ENCODE measurements at regions of chr12 and their contacts with region 1.

Region 1: GRCh38 chr12:118372541-118373495 is at the start of gene TAOK3:
- DNase-seq: peak; percentile 99
- H3K4me3 ChIP-seq: peak within 1 kb of the TSS; percentile 88 to 96 (median 92)
- H3K27ac ChIP-seq: peak within 1 kb of the TSS; percentile 86 to 95 (median 90)
- H3K4me1 ChIP-seq: peaks cover 28 to 67% (median 52%) of the 10 kb centered on the region in 4 donors
- H3K27me3 ChIP-seq: no peaks in the 10 kb centered on the region
- CTCF ChIP-seq: no peak
- EP300 ChIP-seq: no peak
- POLR2A ChIP-seq: peak in 2 of 4 donors; percentile 65 to 67
- total RNA-seq, gene TAOK3: 14.2 to 131 (median 49.4) TPM

Region 2: GRCh38 chr12:118189741-118190191 is 183.1 kb before region 1 on chr12:
- intact Hi-C with region 1: loop called (anchors 5 kb)
- DNase-seq: peak in 1 of 2 donors; percentile 65
- H3K4me3 ChIP-seq: peak overlapping the region; percentile 18 to 35 (median 26)
- H3K27ac ChIP-seq: peak overlapping the region in 4 of 5 donors; percentile 8 to 79 (median 69)
- H3K4me1 ChIP-seq: peaks cover 0 to 54% (median 19%) of the 10 kb centered on the region in 4 donors
- H3K27me3 ChIP-seq: no peaks in the 10 kb centered on the region
- CTCF ChIP-seq: no peak
- EP300 ChIP-seq: no peak
- POLR2A ChIP-seq: no peak

Measured in stomach (tissue), 19 donors.